Left cardiac atrium (tissue), 4 donors: ENCODE measurements at regions of chr7 and their contacts with region 1.

Region 1: GRCh38 chr7:1537535-1538412 is 7.3 kb downstream of the MAFK start:
- DNase-seq: peak; percentile 91
- ATAC-seq: peak; percentile 50 to 58

Region 2: DNA sequence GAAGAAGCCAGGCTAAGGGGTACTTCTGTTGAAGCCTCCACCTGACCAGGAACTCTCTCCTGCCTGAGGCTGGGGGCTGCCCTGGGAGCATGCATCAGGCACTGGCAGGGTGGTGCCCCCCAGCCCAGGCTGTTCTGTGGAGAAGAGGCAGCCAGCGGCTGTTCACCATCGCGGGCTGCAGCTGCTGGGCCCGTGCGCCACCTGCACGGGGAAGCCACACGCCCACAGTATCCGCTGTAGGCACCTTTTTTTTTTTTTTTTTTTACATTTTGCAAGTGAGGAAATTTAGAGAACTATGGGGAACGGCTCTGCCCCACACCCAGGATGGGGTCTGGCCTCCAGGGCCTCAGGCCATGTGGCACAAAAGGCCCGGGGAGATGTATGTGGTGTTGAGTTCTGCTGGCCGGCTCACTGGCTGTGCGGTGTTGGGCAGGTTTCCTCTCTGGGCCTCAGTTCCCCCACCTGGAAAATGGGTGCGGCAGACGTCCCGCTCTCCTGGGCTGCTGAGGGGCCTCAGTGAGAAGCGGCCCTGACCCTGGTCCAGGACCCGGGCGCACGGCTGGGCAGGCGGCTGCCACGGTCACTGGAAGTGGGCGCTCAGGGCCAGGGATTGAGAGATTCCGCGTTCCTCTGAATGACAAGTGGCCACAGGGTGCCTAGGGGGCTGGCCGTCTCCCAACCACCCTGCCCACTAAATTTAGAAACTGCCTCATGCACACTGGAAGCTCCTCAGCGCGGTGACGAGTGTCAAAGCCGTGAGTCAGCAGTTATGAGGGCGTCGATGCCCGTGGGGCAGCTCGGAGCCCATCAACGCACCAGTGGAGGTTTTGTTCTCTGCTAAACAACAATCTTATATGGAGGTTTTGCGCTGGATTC is 24.8 kb before region 1 on chr7:
- intact Hi-C with region 1: loop called in 1 of 2 experiments (anchors 1 kb)
- DNase-seq: peak; percentile 77
- ATAC-seq: peak; percentile 92 to 94